Panc1 (cell line): ENCODE measurements at regions of chr17 and their contacts with region 1.

Region 1: DNA sequence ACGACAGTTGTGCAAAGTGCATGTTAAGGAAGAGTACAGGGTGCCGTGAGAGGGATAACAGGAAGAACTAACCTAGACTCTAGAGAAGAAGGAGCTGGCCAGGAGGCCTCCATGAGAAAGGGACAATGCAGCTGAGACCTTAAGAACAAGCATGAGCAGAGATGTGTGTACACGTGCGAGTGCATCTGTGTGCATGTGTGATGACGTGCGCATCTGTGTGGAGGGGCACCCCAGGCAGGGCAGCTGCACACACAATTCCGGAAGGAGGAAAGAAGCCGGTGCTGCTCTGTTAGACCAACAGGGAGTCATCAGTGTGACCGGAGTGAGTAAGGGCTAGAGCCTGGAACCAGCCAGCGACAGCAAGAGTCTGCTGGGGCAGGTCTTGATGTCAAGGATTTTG is 7.6 kb upstream of the KIF19 start:
- DNase-seq: no peak
- ATAC-seq: no peak
- H3K4me3 ChIP-seq: no peak overlapping the region
- H3K27ac ChIP-seq: no peak overlapping the region
- H3K4me1 ChIP-seq: no peaks in the 10 kb centered on the region
- H3K27me3 ChIP-seq: no peaks in the 10 kb centered on the region; the same call in 1 of the 2 replicates
- CTCF ChIP-seq: no peak

Region 2: GRCh38 chr17:74373838-74374606 is 55.6 kb after region 1 on chr17:
- CTCF ChIA-PET with region 1: no interaction called
- POLR2A ChIA-PET with region 1: no interaction called
- in situ Hi-C with region 1: no loop called
- intact Hi-C with region 1: no loop called
- DNase-seq: no peak
- ATAC-seq: no peak
- H3K4me3 ChIP-seq: no peak overlapping the region
- H3K27ac ChIP-seq: no peak overlapping the region
- H3K4me1 ChIP-seq: no peaks in the 10 kb centered on the region; the same call in 1 of the 2 replicates
- H3K27me3 ChIP-seq: peaks cover 8% of the 10 kb centered on the region
- CTCF ChIP-seq: no peak

Region 3: DNA sequence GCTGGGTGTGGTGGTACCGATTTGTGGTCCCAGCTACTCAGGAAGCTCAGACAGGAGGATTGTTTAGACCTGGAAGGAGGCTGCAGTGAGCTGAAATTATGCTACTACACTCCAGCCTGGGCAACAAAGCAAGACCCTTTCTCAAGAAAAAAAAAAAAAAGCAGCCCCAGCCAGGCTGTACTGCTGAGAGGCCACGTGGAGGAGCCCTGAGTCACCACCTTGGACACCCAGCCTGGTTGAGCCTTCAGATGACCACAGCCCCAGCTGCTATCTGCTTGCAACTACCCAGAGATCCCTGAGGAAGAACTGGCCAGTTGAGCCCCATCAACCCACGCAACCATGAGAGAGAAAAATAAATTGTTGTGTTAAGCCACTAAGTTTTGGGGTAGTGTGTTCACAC is 89.9 kb after region 1 on chr17:
- CTCF ChIA-PET with region 1: interaction called, 13 read pairs
- POLR2A ChIA-PET with region 1: no interaction called
- in situ Hi-C with region 1: no loop called
- intact Hi-C with region 1: no loop called
- DNase-seq: no peak
- ATAC-seq: peak; percentile 77
- H3K4me3 ChIP-seq: no peak overlapping the region
- H3K27ac ChIP-seq: no peak overlapping the region
- H3K4me1 ChIP-seq: no peaks in the 10 kb centered on the region
- H3K27me3 ChIP-seq: no peaks in the 10 kb centered on the region
- CTCF ChIP-seq: no peak